ENCODE measurements at regions of chr7 and their contacts with region 1.

Region 1: GRCh38 chr7:2555121-2556052 is at the start of gene BRAT1:
- DNase-seq: peak; percentile 97 to 98
- H3K4me3 ChIP-seq: peak within 1 kb of the TSS; percentile 97 to 98
- H3K27ac ChIP-seq: peak within 1 kb of the TSS; percentile 96 to 98
- H3K4me1 ChIP-seq: peaks cover 0 to 43% (median 32%) of the 10 kb centered on the region in 4 donors
- H3K27me3 ChIP-seq: no peaks in the 10 kb centered on the region
- CTCF ChIP-seq: peak; percentile 33 to 53

Region 2: GRCh38 chr7:2487586-2488271 is 67.7 kb before region 1 on chr7:
- intact Hi-C with region 1: loop called (anchors 5 kb)
- DNase-seq: peak; percentile 47 to 89
- H3K4me3 ChIP-seq: peak overlapping the region; percentile 24 to 25
- H3K27ac ChIP-seq: peak overlapping the region; percentile 70 to 84
- H3K4me1 ChIP-seq: peaks cover 6 to 38% (median 30%) of the 10 kb centered on the region in 4 donors
- H3K27me3 ChIP-seq: no peaks in the 10 kb centered on the region
- CTCF ChIP-seq: no peak

Region 3: GRCh38 chr7:2602406-2603043 is 47.1 kb after region 1 on chr7:
- intact Hi-C with region 1: no loop called
- DNase-seq: peak in 1 of 2 donors; percentile 64
- H3K4me3 ChIP-seq: no peak overlapping the region
- H3K27ac ChIP-seq: no peak overlapping the region
- H3K4me1 ChIP-seq: peaks cover 0 to 13% (median 13%) of the 10 kb centered on the region in 4 donors
- H3K27me3 ChIP-seq: no peaks in the 10 kb centered on the region
- CTCF ChIP-seq: no peak

Region 4: GRCh38 chr7:2613931-2614600 is 58.7 kb after region 1 on chr7:
- intact Hi-C with region 1: loop called (anchors 5 kb)
- DNase-seq: peak; percentile 87 to 98
- H3K4me3 ChIP-seq: peak overlapping the region; percentile 34 to 35
- H3K27ac ChIP-seq: peak overlapping the region; percentile 89 to 93
- H3K4me1 ChIP-seq: peaks cover 6 to 64% (median 56%) of the 10 kb centered on the region in 4 donors
- H3K27me3 ChIP-seq: no peaks in the 10 kb centered on the region
- CTCF ChIP-seq: no peak